ENCODE measurements at regions of chr22 and their contacts with region 1.

Region 1: GRCh38 chr22:24325105-24325757 is 54.6 kb downstream of the SPECC1L start:
- DNase-seq: peak; percentile 78
- H3K4me3 ChIP-seq: no peak overlapping the region
- H3K27ac ChIP-seq: no peak overlapping the region
- H3K4me1 ChIP-seq: no peaks in the 10 kb centered on the region
- H3K27me3 ChIP-seq: no peaks in the 10 kb centered on the region
- CTCF ChIP-seq: peak; percentile 76

Region 2: GRCh38 chr22:24503137-24503842 is 178.1 kb after region 1 on chr22:
- CTCF ChIA-PET with region 1: no interaction called
- POLR2A ChIA-PET with region 1: no interaction called
- intact Hi-C with region 1: loop called (anchors 1 kb)
- DNase-seq: peak; percentile 73
- H3K4me3 ChIP-seq: no peak overlapping the region
- H3K27ac ChIP-seq: no peak overlapping the region
- H3K4me1 ChIP-seq: peaks cover 6% of the 10 kb centered on the region
- H3K27me3 ChIP-seq: no peaks in the 10 kb centered on the region
- CTCF ChIP-seq: peak; percentile 74

Region 3: GRCh38 chr22:24525416-24526037 is 200.3 kb after region 1 on chr22:
- CTCF ChIA-PET with region 1: no interaction called
- POLR2A ChIA-PET with region 1: no interaction called
- intact Hi-C with region 1: loop called (anchors 1 kb)
- DNase-seq: peak; percentile 69
- H3K4me3 ChIP-seq: no peak overlapping the region
- H3K27ac ChIP-seq: no peak overlapping the region
- H3K4me1 ChIP-seq: no peaks in the 10 kb centered on the region
- H3K27me3 ChIP-seq: no peaks in the 10 kb centered on the region
- CTCF ChIP-seq: peak; percentile 94